ENCODE measurements at regions of chr17 and their contacts with region 1.

Region 1: GRCh38 chr17:40818733-40819527 is 3.5 kb downstream of the KRT10 start:
- DNase-seq: peak; percentile 84
- H3K4me3 Mint-ChIP-seq: peak overlapping the region; percentile 96
- H3K27ac Mint-ChIP-seq: peak overlapping the region; percentile 86
- H3K4me1 Mint-ChIP-seq: peaks cover 26% of the 10 kb centered on the region
- H3K27me3 Mint-ChIP-seq: peaks cover 7% of the 10 kb centered on the region

Region 2: DNA sequence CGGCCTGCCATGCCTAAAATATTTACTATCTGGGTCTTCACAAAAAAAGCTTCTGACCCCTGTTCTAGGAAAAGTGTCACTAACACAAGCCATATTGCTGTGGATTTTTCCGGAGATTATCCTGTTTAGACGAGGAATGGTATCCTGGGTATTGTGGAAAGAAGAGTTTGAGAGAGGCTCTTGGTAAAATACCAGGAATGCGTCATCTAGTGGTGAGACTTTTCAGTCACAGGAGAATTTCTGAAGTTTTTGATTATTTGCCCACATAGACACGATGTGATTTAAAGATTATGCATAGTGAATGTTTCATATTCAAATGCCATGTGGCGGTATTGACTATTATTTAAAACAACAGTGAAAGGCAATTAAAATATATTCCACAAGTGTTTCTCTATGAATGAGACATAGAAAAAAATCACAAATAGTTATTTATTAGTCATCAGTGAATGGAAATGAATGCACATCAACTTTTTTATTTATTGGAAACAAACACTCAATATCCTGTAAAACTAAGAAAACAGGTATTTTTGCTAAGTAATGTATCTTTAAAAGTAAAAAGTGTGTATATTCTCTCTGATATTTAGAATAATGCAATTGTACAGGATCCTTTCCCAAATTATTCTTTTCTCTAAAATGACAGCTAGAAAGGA is 27.0 kb before region 1 on chr17:
- intact Hi-C with region 1: no loop called
- DNase-seq: no peak
- H3K4me3 Mint-ChIP-seq: no peak overlapping the region
- H3K27ac Mint-ChIP-seq: no peak overlapping the region
- H3K4me1 Mint-ChIP-seq: no peaks in the 10 kb centered on the region
- H3K27me3 Mint-ChIP-seq: peaks cover 33% of the 10 kb centered on the region

Region 3: GRCh38 chr17:40903129-40904065 is 84.5 kb after region 1 on chr17:
- intact Hi-C with region 1: loop called (anchors 5 kb)
- DNase-seq: no peak
- H3K4me3 Mint-ChIP-seq: no peak overlapping the region
- H3K27ac Mint-ChIP-seq: no peak overlapping the region
- H3K4me1 Mint-ChIP-seq: peaks cover 17% of the 10 kb centered on the region
- H3K27me3 Mint-ChIP-seq: peaks cover 24% of the 10 kb centered on the region

Region 4: DNA sequence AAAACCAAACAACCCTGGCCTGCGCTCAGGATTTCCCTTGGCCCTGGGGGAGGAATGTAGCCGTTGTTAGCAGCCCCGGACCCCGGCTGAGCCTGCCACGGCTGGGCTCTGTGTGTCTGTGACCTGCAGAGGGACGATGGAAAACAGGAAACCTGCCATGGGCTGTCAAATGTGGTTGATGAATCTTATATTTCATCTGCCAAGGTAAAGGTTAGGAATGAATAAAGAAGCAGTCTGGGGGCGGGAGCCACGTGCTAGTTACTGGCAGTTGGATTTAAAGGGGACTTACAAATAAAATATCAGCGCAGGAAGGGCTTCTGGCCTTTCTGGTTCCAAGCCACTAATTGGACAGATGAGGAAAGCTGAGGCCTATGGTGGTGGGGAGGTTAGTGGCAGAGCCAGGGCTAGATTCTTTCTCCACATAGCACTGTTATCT is 118.5 kb after region 1 on chr17 and contains the start of gene KRT23:
- intact Hi-C with region 1: no loop called
- DNase-seq: no peak
- H3K4me3 Mint-ChIP-seq: no peak within 1 kb of the TSS
- H3K27ac Mint-ChIP-seq: no peak within 1 kb of the TSS
- H3K4me1 Mint-ChIP-seq: no peaks in the 10 kb centered on the region
- H3K27me3 Mint-ChIP-seq: peaks cover 16% of the 10 kb centered on the region
- total RNA-seq, gene KRT23: not detected in 2 replicates

Measured in activated T-helper 2 cell treated with anti-CD3 and anti-CD28 coated beads, Interferon-gamma antibody, Interleukin-2, Interleukin-4, amounts not matched to agents 10 μg/mL and 5 μg/mL and 100 μg/mL, durations not matched to agents 14 hours and 24 hours and 36 hours (primary cell).